Transverse colon (tissue), 4 donors: ENCODE measurements at regions of chr12 and their contacts with region 1.

Region 1: GRCh38 chr12:27733052-27733656 is 22.5 kb downstream of the MRPS35 start:
- DNase-seq: peak; percentile 35
- H3K4me3 ChIP-seq: no peak overlapping the region
- H3K27ac ChIP-seq: no peak overlapping the region
- H3K4me1 ChIP-seq: peaks cover 0 to 4% (median 0%) of the 10 kb centered on the region in 4 donors
- H3K27me3 ChIP-seq: no peaks in the 10 kb centered on the region
- CTCF ChIP-seq: peak; percentile 71 to 85 (median 79)
- EP300 ChIP-seq: no peak
- POLR2A ChIP-seq: no peak

Region 2: GRCh38 chr12:27818401-27818918 is 85.3 kb after region 1 on chr12:
- in situ Hi-C with region 1: loop called in 1 of 4 experiments (anchors 10 kb)
- intact Hi-C with region 1: loop called (anchors 10 kb)
- DNase-seq: no peak
- H3K4me3 ChIP-seq: no peak overlapping the region
- H3K27ac ChIP-seq: peak overlapping the region in 2 of 4 donors; percentile 16 to 18
- H3K4me1 ChIP-seq: peaks cover 0 to 18% (median 12%) of the 10 kb centered on the region in 4 donors
- H3K27me3 ChIP-seq: no peaks in the 10 kb centered on the region
- CTCF ChIP-seq: no peak
- EP300 ChIP-seq: no peak
- POLR2A ChIP-seq: no peak

Region 3: GRCh38 chr12:27940756-27941402 is 207.7 kb after region 1 on chr12:
- in situ Hi-C with region 1: loop called (anchors 5 to 25 kb)
- intact Hi-C with region 1: loop called (anchors 10 kb)
- DNase-seq: peak; percentile 76
- H3K4me3 ChIP-seq: no peak overlapping the region
- H3K27ac ChIP-seq: no peak overlapping the region
- H3K4me1 ChIP-seq: no peaks in the 10 kb centered on the region
- H3K27me3 ChIP-seq: no peaks in the 10 kb centered on the region
- CTCF ChIP-seq: peak; percentile 65 to 83 (median 72)
- EP300 ChIP-seq: no peak
- POLR2A ChIP-seq: no peak